ENCODE measurements at regions of chr5 and their contacts with region 1.

Region 1: DNA sequence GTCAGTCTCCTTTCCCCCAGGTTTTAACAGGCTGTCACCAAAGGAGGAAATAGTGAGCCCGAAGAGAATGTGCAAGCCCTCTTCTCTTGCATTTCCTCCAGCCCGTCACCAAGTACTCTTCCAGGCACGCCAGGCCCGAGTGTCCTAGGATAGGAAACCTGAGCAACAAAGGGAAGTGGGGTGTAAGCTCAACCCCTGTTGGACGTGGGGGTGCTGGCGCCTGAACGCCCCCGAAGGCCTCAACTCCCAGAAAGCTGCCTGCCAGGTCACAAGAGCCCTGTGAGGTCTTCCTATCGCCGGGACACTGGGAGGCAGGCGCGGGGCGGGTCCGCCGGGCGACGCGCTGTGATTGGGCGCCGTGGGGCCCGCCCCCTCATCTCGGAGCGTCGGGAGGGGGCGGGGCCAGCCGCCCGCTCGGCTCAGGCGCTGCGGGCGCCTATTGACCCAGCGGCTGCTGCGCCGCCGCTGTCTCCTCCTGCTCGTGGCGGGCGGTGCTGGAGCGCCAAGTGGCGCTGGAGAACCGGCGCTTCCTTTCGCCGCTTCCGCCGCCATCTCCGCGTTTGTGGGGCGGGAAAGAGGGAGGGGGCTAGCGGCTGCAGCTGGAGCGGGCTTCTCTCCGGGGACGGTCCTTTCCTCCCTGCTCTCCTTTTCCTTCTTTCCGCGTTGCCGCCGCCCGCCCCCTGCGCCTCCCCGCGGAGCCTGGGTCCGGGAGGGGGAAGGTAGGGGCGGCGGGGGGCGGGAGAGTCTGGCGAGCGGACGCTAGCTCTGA is 572 bp upstream of the MAN2A1 start:
- DNase-seq: peak; percentile 89
- ATAC-seq: peak; percentile 78
- H3K4me3 ChIP-seq: peak overlapping the region; percentile 98
- H3K27ac ChIP-seq: peak overlapping the region; percentile 43
- H3K4me1 ChIP-seq: peaks cover 23% of the 10 kb centered on the region
- H3K27me3 ChIP-seq: no peaks in the 10 kb centered on the region
- CTCF ChIP-seq: no peak

Region 2: DNA sequence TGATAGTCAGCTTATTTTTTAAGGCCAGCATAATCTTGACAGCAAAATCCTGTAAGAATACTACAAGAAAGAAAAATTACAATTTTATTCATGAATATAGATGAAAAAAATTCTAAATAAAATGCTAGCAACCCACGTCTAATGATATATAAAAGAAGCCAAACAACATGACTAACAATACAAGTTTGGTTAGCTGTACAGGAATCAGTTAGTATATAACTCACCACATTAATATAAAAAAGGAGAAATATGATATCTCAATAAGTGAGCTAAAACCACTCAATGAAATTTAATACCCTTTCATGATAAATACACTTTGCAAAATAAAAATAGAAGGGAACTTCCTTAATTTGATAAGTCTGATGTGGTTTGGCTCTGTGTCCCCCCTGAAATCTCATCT is 139.1 kb before region 1 on chr5:
- CTCF ChIA-PET with region 1: no interaction called
- POLR2A ChIA-PET with region 1: interaction called, 12 read pairs
- intact Hi-C with region 1: no loop called
- DNase-seq: peak; percentile 50
- ATAC-seq: peak; percentile 93
- H3K4me3 ChIP-seq: no peak overlapping the region
- H3K27ac ChIP-seq: no peak overlapping the region
- H3K4me1 ChIP-seq: peaks cover 13% of the 10 kb centered on the region
- H3K27me3 ChIP-seq: no peaks in the 10 kb centered on the region
- CTCF ChIP-seq: no peak

Region 3: DNA sequence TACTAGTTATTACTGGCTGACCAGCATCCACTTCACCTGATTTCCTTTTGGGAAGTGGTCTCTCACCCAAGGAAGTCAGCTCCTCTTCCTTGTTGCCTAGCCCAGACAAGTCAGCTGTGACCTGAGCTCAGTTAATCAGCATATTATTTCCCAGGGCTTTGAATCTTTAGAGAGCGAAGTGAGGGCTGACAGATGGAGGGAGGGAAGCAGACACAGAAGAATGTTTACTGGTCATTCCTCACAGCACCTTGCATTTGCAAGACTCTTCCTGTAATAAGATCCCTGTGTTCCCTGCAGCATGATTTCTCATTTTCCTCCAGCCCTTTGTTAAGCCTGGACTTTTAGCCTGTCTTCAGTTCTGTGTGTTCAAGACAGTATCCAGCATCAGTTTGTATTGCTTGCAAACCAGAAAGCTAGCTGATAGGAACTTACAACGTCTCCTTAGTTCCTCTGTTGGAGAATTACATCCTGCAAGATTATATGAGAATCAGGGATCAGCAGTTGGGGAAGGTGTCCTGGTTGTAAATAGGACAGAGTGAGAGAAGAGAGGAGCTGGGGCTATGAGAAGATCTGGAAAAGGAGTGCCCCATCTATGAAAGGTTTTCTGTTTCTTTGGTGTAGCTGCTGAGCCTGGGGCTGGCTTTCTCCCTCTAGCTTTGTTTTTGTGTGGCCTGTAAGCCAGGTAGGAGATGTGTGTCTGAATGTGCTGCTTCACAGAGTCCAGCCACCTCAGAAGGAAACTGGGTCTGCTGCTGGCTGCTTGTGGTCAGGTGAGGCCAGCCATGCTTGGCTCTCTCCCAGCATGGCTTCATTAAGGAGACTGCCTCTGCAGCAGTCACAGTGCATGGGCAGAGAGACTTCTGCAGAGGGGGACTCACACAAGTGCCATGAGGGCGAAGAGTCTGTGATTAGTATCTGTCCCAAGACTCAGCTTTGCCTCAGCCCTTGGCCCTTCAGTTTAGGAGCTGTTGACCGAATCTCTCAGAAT is 50.9 kb after region 1 on chr5:
- CTCF ChIA-PET with region 1: no interaction called
- POLR2A ChIA-PET with region 1: interaction called, 23 read pairs
- intact Hi-C with region 1: no loop called
- DNase-seq: peak; percentile 39
- ATAC-seq: peak; percentile 68
- H3K4me3 ChIP-seq: no peak overlapping the region; the same call in 1 of the 2 replicates
- H3K27ac ChIP-seq: peak overlapping the region; percentile 6; the same call in 1 of the 2 replicates
- H3K4me1 ChIP-seq: peaks cover 41% of the 10 kb centered on the region
- H3K27me3 ChIP-seq: no peaks in the 10 kb centered on the region
- CTCF ChIP-seq: no peak

Region 4: DNA sequence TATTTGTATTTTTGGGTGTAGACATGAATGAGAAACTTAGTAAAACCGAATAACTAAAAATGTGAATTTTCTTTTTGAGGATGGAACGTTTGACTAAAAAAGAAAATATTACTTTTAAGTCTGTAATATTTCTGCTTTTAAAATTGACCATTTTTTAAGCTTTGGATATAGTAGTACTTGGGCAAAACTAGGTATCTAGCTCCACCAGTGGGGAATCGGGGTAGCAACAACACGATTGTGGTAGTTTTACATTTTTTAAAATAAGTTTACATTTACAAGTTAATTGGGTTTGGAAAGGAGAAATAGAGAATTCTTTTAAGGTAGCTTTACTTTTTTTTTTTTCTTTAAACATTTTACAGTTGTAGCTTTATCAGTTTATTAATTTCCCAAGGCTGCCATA is 155.0 kb after region 1 on chr5:
- CTCF ChIA-PET with region 1: interaction called, 3 read pairs
- POLR2A ChIA-PET with region 1: no interaction called
- intact Hi-C with region 1: loop called (anchors 1 kb)
- DNase-seq: peak; percentile 55
- ATAC-seq: peak; percentile 56
- H3K4me3 ChIP-seq: no peak overlapping the region
- H3K27ac ChIP-seq: no peak overlapping the region
- H3K4me1 ChIP-seq: peaks cover 7% of the 10 kb centered on the region
- H3K27me3 ChIP-seq: no peaks in the 10 kb centered on the region
- CTCF ChIP-seq: peak; percentile 79

Region 5: GRCh38 chr5:110001648-110002047 is 312.5 kb after region 1 on chr5:
- CTCF ChIA-PET with region 1: no interaction called
- POLR2A ChIA-PET with region 1: interaction called, 3 read pairs
- intact Hi-C with region 1: loop called (anchors 5 kb)
- DNase-seq: no peak
- ATAC-seq: no peak
- H3K4me3 ChIP-seq: no peak overlapping the region
- H3K27ac ChIP-seq: peak overlapping the region; percentile 93
- H3K4me1 ChIP-seq: peaks cover 30% of the 10 kb centered on the region
- H3K27me3 ChIP-seq: no peaks in the 10 kb centered on the region
- CTCF ChIP-seq: no peak